ENCODE measurements at regions of chr6 and their contacts with region 1.

Region 1: DNA sequence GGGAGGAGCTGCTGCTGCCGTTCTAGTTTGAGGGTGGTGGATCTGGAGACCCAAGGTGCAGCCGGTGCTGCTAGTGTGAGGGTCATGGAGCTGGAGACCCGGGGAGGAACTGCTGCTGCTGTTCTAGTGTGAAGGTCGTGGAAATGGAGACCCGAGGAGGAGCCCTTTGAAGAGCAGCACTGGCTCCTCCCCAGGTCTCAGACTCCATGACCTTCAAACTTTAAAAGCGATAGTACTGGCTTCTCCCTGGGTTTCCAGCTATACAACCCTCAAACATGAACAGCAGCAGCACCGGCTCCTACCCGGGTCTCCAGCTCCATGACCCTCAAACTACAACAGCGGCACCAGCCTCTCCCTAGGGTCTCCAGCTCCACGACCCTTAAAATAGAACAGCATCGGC is 15.5 kb downstream of the ULBP3 start:
- DNase-seq: no peak
- H3K4me3 ChIP-seq: no peak overlapping the region
- H3K27ac ChIP-seq: no peak overlapping the region
- H3K4me1 ChIP-seq: no peaks in the 10 kb centered on the region
- H3K27me3 ChIP-seq: peaks cover 73% of the 10 kb centered on the region
- CTCF ChIP-seq: no peak

Region 2: GRCh38 chr6:150037526-150038201 is 15.8 kb before region 1 on chr6:
- CTCF ChIA-PET with region 1: interaction called, 6 read pairs
- POLR2A ChIA-PET with region 1: interaction called, 3 read pairs
- intact Hi-C with region 1: loop called (anchors 2 kb)
- DNase-seq: no peak
- H3K4me3 ChIP-seq: peak overlapping the region; percentile 15
- H3K27ac ChIP-seq: no peak overlapping the region
- H3K4me1 ChIP-seq: no peaks in the 10 kb centered on the region
- H3K27me3 ChIP-seq: peaks cover 86% of the 10 kb centered on the region
- CTCF ChIP-seq: no peak

Region 3: GRCh38 chr6:150075034-150075421 is 21.6 kb after region 1 on chr6:
- CTCF ChIA-PET with region 1: no interaction called
- POLR2A ChIA-PET with region 1: no interaction called
- intact Hi-C with region 1: no loop called
- DNase-seq: no peak
- H3K4me3 ChIP-seq: no peak overlapping the region
- H3K27ac ChIP-seq: no peak overlapping the region
- H3K4me1 ChIP-seq: no peaks in the 10 kb centered on the region
- H3K27me3 ChIP-seq: no peaks in the 10 kb centered on the region
- CTCF ChIP-seq: no peak

Region 4: DNA sequence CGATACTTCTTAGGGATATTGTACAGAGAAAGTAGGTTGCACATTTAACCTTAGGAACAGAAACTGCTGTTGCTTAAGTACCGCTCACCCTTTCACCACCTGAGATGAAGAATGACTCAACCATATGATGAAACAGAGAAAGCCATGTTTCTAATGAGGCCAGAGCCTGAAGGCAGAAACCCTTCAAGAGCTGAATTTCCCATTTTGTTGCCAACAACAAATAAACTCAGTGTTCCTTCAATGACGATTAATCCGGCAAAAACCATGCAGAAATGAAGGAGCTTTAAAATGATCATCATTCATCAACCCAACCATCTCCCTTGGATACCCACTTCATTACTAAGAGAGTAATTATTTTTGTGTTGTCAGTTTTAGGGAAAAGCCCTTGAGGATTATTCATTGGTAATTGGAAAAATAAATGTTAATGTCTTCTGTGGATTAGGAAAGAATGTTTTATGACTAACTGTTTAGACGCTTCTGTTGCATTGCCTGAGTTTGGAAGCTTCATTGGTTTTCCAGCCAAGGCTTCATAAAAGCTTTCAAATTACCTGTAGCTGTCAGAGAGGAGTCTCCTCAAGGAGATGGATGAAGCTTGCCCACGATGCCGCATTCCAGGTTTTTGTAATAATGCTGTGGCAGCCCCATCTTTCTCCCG is 203.3 kb after region 1 on chr6:
- CTCF ChIA-PET with region 1: no interaction called
- POLR2A ChIA-PET with region 1: no interaction called
- intact Hi-C with region 1: no loop called
- DNase-seq: no peak
- H3K4me3 ChIP-seq: no peak overlapping the region
- H3K27ac ChIP-seq: no peak overlapping the region
- H3K4me1 ChIP-seq: no peaks in the 10 kb centered on the region
- H3K27me3 ChIP-seq: no peaks in the 10 kb centered on the region
- CTCF ChIP-seq: no peak

Measured in A673 (cell line).